ENCODE measurements at regions of chr7 and their contacts with region 1.

Region 1: GRCh38 chr7:45160417-45160881 is 2.9 kb downstream of the RAMP3 start:
- DNase-seq: no peak
- H3K4me3 Mint-ChIP-seq: no peak overlapping the region
- H3K27ac Mint-ChIP-seq: no peak overlapping the region
- H3K4me1 Mint-ChIP-seq: peaks cover 3% of the 10 kb centered on the region
- H3K27me3 Mint-ChIP-seq: peaks cover 33% of the 10 kb centered on the region

Region 2: DNA sequence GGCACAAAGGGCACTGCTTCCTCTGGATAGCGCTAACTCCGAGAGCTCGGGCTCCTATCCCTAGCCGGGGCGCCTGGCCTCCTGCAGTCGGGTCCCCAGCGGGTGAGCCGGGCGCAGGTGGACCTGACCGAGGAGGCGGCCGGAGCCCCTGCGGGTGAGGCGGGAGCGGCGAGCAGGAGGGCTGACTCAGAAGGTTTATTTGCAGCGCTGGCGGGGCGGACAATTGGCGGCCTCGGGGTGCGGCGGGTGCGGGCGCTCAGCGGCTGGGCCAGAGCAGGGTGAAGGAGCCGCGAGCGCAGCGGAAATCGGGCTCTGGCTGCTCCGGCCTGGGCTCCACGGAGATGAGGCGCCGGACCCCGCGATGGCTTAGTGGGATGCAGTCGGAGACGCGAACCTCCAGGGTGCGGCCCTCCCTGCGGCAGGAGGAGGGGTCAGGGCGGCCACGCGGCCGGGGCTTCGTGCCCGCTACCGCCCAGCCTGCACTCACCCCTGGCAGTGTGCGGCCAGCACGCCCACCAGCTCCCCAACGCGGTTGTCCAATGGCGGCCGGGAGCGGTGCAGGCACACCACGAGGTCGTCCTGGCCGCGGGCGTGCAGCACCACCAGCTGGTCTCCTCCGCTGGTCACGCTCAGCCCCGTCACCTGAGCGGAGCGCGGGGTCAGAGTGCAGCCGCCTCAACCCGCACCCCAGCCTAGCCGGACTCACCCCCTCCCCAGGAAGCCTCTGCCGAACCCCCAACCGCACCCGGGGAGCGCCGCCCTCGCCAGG is 197.8 kb before region 1 on chr7:
- intact Hi-C with region 1: no loop called
- DNase-seq: no peak
- H3K4me3 Mint-ChIP-seq: no peak overlapping the region
- H3K27ac Mint-ChIP-seq: no peak overlapping the region
- H3K4me1 Mint-ChIP-seq: peaks cover 13% of the 10 kb centered on the region
- H3K27me3 Mint-ChIP-seq: no peaks in the 10 kb centered on the region

Region 3: GRCh38 chr7:45196374-45196773 is 35.9 kb after region 1 on chr7:
- intact Hi-C with region 1: loop called (anchors 5 kb)
- DNase-seq: peak; percentile 15
- H3K4me3 Mint-ChIP-seq: no peak overlapping the region
- H3K27ac Mint-ChIP-seq: peak overlapping the region; percentile 8
- H3K4me1 Mint-ChIP-seq: peaks cover 43% of the 10 kb centered on the region
- H3K27me3 Mint-ChIP-seq: peaks cover 26% of the 10 kb centered on the region